Activated B cell treated with CpG ODN at 0.5 μM for 24 hours (primary cell): ENCODE measurements at regions of chr5 and their contacts with region 1.

Region 1: DNA sequence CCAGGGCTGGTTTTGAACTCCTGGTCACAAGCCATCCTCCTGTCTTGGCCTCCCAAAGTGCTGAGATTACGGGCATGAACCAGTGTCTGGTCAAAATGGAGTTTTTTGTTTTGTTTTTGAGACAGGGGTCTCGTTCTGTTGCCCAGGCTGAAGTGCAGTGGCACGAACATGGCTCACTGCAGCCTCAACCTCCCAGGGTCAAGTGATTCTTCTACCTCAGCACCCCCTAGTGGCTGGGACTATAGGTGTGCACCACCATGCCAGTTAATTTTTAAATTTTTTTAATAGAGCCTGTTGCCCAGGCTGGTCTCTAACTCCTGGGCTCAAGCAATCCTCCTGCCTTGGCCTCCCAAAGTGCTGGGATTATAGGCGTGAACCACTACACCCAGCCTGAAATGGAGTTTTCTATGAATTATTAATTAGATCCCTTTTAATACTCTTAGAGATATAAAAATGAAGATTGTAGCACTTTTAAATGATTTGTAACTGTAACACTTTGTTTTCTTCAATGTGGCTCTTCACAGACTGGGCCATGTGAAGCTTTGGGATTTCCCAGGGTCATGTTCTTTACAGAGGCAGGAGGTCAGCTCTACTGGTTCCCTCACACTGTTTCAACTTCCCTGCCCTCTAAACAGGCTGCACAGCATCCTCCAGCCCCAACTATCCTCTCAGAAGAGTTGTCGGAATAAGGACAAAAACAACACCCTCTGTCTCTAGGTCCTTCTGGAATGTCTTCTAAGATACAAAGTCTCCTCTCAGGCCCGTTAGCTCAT is 32.7 kb upstream of the SPARC start:
- DNase-seq: no peak
- ATAC-seq: no peak
- H3K4me3 Mint-ChIP-seq: no peak overlapping the region
- H3K27ac Mint-ChIP-seq: no peak overlapping the region
- H3K4me1 Mint-ChIP-seq: peaks cover 30% of the 10 kb centered on the region
- H3K27me3 Mint-ChIP-seq: no peaks in the 10 kb centered on the region
- CTCF ChIP-seq: no peak

Region 2: GRCh38 chr5:151461312-151461711 is 258.1 kb before region 1 on chr5:
- CTCF ChIA-PET with region 1: no interaction called
- POLR2A ChIA-PET with region 1: no interaction called
- intact Hi-C with region 1: no loop called
- DNase-seq: no peak
- ATAC-seq: no peak
- H3K4me3 Mint-ChIP-seq: no peak overlapping the region
- H3K27ac Mint-ChIP-seq: no peak overlapping the region
- H3K4me1 Mint-ChIP-seq: no peaks in the 10 kb centered on the region
- H3K27me3 Mint-ChIP-seq: no peaks in the 10 kb centered on the region
- CTCF ChIP-seq: no peak

Region 3: DNA sequence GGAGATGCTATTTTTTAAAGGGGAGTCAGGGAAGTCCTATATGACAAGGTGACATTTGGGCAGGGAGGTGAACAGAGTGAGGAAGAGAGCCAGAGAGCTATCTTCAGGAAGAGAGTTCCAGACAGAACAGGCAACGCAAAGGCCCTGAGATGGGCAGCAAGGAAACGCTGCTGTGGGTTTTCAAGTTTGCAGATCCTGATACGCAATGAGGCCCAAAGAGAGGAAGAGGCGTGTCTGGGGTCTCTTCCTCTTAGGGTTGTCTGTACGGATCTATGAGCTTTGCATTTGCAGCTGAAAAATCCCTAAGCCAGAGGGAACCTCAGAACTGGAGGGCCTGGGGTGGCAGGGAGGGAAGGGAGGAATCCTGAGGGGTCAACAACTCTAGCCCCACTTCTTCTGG is 141.9 kb before region 1 on chr5:
- CTCF ChIA-PET with region 1: no interaction called
- POLR2A ChIA-PET with region 1: no interaction called
- intact Hi-C with region 1: loop called (anchors 1 kb)
- DNase-seq: no peak
- ATAC-seq: peak; percentile 86
- H3K4me3 Mint-ChIP-seq: peak overlapping the region; percentile 59
- H3K27ac Mint-ChIP-seq: peak overlapping the region; percentile 89
- H3K4me1 Mint-ChIP-seq: peaks cover 22% of the 10 kb centered on the region
- H3K27me3 Mint-ChIP-seq: no peaks in the 10 kb centered on the region
- CTCF ChIP-seq: no peak

Region 4: GRCh38 chr5:151740336-151740942 is 21.0 kb after region 1 on chr5:
- CTCF ChIA-PET with region 1: interaction called, 36 read pairs
- POLR2A ChIA-PET with region 1: interaction called, 3 read pairs
- intact Hi-C with region 1: loop called (anchors 1 kb)
- DNase-seq: no peak
- ATAC-seq: peak; percentile 69
- H3K4me3 Mint-ChIP-seq: no peak overlapping the region
- H3K27ac Mint-ChIP-seq: no peak overlapping the region
- H3K4me1 Mint-ChIP-seq: peaks cover 16% of the 10 kb centered on the region
- H3K27me3 Mint-ChIP-seq: no peaks in the 10 kb centered on the region
- CTCF ChIP-seq: peak; percentile 68

Region 5: DNA sequence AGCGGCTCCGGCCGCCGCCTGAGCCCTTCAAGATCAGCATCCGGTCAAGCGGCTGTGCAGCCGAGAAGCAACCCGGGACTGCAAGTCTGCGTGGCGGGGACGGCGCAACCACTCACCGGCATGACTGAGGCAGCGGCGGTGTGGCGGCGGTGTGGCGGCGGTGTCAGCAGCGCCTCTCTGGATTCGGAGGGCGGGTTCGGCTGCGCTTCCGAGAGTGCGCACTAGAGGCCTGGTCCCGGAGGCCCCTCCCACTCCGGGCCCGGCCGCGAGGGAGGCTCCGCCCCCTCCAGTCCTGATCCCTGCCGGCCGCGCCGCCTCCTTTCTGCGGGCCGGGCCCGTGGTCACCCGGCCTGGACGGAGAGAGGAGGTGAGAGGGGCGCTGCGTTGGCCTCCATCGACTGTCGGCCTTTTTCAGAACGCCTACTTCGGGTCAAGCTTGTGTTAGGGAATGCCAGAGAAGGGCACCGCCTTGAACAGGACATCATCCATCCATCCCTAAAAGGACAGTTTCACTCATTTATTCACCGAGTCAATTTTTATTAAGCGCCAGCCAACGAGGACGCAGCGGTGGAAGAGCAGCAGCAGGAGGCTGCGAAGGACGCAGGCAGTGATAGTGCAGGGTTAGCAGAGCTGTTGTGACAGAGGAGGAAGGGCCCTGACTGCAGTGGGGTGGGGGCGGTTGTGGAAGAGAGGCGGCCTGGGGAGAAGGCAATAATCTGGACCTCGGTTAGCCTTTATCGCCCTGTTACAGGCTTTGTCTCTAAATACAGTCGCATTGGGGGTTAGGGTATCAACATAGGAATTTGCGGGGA is 39.2 kb after region 1 on chr5 and contains the start of gene ATOX1:
- CTCF ChIA-PET with region 1: no interaction called
- POLR2A ChIA-PET with region 1: no interaction called
- intact Hi-C with region 1: loop called (anchors 5 kb)
- DNase-seq: peak; percentile 91
- ATAC-seq: peak; percentile 100
- H3K4me3 Mint-ChIP-seq: peak within 1 kb of the TSS; percentile 89
- H3K27ac Mint-ChIP-seq: peak within 1 kb of the TSS; percentile 84
- H3K4me1 Mint-ChIP-seq: peaks cover 38% of the 10 kb centered on the region
- H3K27me3 Mint-ChIP-seq: no peaks in the 10 kb centered on the region
- CTCF ChIP-seq: no peak
- total RNA-seq, gene ATOX1: 61.2 and 66.6 TPM in 2 replicates